ENCODE measurements at regions of chr16 and their contacts with region 1.

Region 1: GRCh38 chr16:72501739-72502593 is 330.0 kb upstream of the PMFBP1 start:
- DNase-seq: peak; percentile 60
- H3K4me3 ChIP-seq: no peak overlapping the region
- H3K27ac ChIP-seq: no peak overlapping the region
- H3K4me1 ChIP-seq: no peaks in the 10 kb centered on the region
- CTCF ChIP-seq: peak; percentile 97

Region 2: DNA sequence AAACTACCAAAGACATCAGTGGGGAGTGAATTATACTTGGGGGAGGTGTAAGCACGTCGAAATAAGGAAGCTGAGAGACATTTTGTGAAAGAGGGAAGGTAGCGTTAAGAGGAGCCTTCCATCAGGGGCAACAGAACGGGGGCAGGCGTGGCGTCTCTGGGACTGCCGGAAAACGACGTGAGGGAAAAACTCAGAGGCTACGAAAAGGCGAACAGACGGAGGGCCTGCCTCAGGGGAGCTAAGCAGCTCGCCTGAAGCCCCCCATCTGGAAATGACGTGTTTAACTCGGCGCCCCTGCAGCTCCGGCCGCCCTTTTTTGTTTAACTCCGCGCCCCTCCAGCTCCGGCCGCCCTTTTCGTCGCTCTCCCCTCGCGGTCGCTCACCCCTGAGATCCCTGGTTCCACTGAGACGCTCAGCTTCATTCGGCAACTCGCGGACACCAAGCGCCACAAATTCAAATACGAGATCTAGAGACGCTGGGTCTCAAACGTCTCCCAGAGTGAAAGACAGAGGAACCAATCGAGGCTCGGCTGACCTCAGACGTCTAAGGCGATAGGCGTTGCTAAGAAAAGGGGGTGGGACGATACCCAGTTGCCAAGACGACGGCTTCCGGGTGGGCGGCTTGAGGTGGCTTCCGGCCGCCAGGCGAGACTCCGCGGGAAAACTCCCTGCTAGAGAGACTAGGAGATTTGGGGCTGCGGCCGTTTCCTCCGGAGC is 162.7 kb after region 1 on chr16:
- CTCF ChIA-PET with region 1: no interaction called
- POLR2A ChIA-PET with region 1: no interaction called
- intact Hi-C with region 1: loop called (anchors 5 kb)
- DNase-seq: peak; percentile 98
- H3K4me3 ChIP-seq: peak overlapping the region; percentile 94
- H3K27ac ChIP-seq: peak overlapping the region; percentile 84
- H3K4me1 ChIP-seq: peaks cover 55% of the 10 kb centered on the region
- CTCF ChIP-seq: no peak

Region 3: DNA sequence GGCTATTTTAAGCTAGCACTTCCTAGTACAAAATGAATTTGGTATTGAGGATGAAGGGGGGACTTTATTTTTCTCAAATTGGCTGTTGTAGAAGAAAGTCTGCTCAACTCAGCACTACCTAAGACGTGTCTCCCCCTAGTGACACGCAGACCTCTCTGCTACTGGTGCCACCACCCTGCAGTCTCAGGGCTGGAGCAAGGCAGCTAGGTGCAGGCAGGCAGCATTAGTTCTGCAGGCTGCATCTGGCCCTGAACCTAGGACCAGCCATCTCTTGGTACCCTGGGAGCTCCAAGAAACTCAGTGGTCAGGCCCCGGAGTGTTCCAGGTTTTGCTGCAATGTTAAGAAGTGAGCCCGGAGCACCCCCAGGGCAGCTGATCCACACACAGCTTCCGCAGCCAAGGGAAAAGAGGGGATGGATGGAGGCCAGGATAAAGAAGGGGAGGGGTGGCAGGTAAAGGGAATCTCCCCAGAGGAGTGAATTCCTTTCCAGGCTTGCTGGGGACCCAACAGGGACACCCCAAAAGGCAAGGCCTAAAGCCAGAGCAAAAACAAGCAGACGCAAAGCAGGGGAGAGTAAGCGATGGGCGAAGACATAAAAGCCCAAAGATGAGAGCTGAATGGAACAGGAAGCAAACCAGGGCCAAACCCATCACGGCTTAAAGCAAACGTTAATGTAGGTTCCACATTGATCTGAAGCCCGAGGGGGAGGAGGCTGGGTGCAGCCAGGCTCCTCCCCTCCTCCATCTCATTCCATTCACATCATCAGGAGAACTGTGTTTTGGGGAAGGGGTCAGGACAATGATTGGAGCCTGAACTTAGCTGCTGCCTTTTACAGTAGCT is 345.4 kb after region 1 on chr16:
- CTCF ChIA-PET with region 1: no interaction called
- POLR2A ChIA-PET with region 1: no interaction called
- intact Hi-C with region 1: loop called (anchors 1 kb)
- DNase-seq: peak; percentile 34
- H3K4me3 ChIP-seq: no peak overlapping the region
- H3K27ac ChIP-seq: no peak overlapping the region
- H3K4me1 ChIP-seq: peaks cover 10% of the 10 kb centered on the region
- CTCF ChIP-seq: peak; percentile 71

Region 4: DNA sequence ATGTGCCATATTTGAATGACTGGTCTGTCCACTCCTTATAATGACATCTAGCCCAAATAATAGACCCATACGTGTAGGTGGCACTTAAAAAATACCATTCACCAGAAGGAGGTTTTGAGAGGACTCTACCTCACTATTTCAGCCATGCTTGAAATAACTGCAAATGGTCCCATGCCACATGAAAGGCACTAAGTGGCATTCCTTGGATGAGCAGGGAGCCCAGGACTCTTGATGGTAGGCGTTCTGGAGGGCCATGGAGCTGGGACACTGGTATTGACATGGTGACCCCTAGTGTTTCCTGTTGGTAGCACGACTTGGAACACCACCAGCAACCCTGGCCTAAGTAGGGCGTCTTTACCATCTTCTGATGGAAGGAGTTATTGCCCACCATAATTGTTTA is 694.7 kb after region 1 on chr16:
- CTCF ChIA-PET with region 1: no interaction called
- POLR2A ChIA-PET with region 1: no interaction called
- intact Hi-C with region 1: loop called (anchors 2 kb)
- DNase-seq: peak; percentile 31
- H3K4me3 ChIP-seq: no peak overlapping the region
- H3K27ac ChIP-seq: no peak overlapping the region
- H3K4me1 ChIP-seq: no peaks in the 10 kb centered on the region
- CTCF ChIP-seq: peak; percentile 80

Measured in OCI-LY7 (cell line).